CD14-positive monocyte (primary cell): ENCODE measurements at regions of chr19 and their contacts with region 1.

Region 1: DNA sequence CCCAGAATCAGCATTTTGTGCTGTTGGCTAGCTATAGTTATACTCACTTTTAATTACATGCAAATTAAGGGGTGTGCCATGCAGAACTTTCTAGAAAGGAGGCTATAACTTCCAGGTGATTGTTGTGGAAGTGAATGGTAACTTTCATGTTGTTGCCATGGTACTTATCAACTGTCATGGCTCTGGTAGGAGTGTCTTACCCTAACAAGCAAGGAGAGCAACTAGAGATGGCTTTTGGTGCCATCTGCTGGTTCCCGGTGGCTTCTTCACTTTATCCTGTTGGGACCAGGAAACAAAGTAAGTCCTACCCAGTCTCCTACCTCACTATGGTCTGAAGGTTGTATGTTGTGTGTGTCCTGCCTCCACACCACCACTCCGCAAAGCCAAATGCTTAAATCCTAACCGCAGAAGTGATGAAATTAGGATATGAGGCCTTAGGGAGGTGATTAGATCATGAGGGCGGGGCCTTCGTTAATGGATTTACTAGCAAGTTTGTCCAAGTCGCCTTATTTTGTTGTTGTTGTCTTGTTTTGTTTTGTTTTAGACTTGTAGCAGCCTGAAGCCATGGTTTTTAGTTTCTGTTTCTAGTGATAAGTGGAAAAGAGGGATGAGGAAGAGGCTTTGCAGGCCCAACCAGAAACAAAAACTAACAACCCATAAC is 22.6 kb downstream of the FBXL12 start:
- DNase-seq: peak; percentile 85 to 94 (median 86)
- H3K4me3 ChIP-seq: no peak overlapping the region
- H3K4me3 Mint-ChIP-seq: peak overlapping the region; percentile 23 to 43
- H3K27ac ChIP-seq: peak overlapping the region in 1 of 2 donors; percentile 71
- H3K27ac Mint-ChIP-seq: peak overlapping the region; percentile 9 to 91 (median 72)
- H3K4me1 ChIP-seq: peaks cover 28 to 37% of the 10 kb centered on the region in 2 donors
- H3K4me1 Mint-ChIP-seq: peaks cover 34% of the 10 kb centered on the region
- H3K27me3 ChIP-seq: no peaks in the 10 kb centered on the region
- H3K27me3 Mint-ChIP-seq: no peaks in the 10 kb centered on the region
- CTCF ChIP-seq: peak; percentile 82

Region 2: DNA sequence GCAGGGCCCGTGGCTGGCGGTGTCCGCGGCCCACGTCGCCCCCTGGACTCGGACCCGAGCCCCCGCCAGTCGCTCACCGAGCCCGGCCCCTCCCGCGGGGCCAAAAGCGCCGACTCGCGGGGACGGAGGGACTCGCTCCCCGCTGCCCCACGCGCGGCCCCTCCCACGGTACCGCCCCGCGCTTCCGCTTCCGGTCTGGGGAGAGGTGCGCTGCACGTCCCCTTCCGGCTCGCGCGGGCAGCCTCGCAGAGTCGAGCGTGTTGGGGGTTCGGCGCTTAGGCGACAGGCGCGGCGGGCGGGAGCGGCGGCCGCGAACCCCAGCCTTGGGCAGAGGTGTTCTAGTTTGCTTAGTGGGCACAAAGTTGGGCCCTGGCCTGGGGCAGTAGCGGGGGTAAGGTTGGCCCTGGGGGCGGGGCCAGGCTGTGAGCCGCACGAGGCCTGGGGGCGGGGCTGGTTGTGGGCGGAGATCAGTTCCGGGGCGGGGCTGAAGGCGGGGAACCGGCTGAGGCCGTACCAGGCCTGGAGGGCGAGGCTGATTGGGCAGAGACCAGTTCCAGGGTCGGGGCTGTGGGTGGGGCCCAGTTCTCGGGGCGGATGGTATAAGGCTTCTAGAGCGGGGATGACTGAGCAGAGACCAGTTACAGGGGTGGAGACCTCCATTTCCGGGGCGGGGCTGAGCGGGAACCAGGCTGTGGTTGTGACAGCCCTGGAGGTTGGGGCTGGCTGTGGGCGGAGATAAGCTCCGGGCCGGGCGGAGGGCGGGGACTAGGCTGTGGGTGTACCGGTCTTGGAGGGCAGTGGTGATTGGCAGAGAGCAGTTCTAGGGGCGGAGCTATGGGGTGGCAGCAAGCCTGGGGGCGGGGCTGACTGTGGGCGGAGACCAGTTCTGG is 963.9 kb before region 1 on chr19 and contains the starts of genes MBD3L1 and ZNF558:
- intact Hi-C with region 1: loop called in 1 of 2 experiments (anchors 10 kb)
- DNase-seq: peak; percentile 98 to 99 (median 98)
- H3K4me3 ChIP-seq: peak within 1 kb of the TSS; percentile 65 to 92 (median 82)
- H3K4me3 Mint-ChIP-seq: peak within 1 kb of the TSS; percentile 85 to 91
- H3K27ac ChIP-seq: peak within 1 kb of the TSS; percentile 80 to 91
- H3K27ac Mint-ChIP-seq: peak within 1 kb of the TSS; percentile 86 to 96 (median 94)
- H3K4me1 ChIP-seq: peaks cover 11 to 18% of the 10 kb centered on the region in 2 donors
- H3K4me1 Mint-ChIP-seq: peaks cover 16% of the 10 kb centered on the region
- H3K27me3 ChIP-seq: no peaks in the 10 kb centered on the region
- H3K27me3 Mint-ChIP-seq: peaks cover 2 to 3% (median 3%) of the 10 kb centered on the region in 3 donors
- CTCF ChIP-seq: peak; percentile 46
- polyA plus RNA-seq, gene MBD3L1: not detected
- polyA plus RNA-seq, gene ZNF558: 3.7 to 22.1 (median 5.6) TPM

Region 3: GRCh38 chr19:9205501-9206113 is 590.6 kb before region 1 on chr19:
- intact Hi-C with region 1: loop called (anchors 5 to 10 kb)
- DNase-seq: peak; percentile 30 to 59 (median 44)
- H3K4me3 ChIP-seq: no peak overlapping the region
- H3K4me3 Mint-ChIP-seq: peak overlapping the region; percentile 52 to 76
- H3K27ac ChIP-seq: no peak overlapping the region
- H3K27ac Mint-ChIP-seq: peak overlapping the region in 1 of 7 donors; percentile 33
- H3K4me1 ChIP-seq: no peaks in the 10 kb centered on the region
- H3K4me1 Mint-ChIP-seq: peaks cover 5% of the 10 kb centered on the region
- H3K27me3 ChIP-seq: no peaks in the 10 kb centered on the region
- H3K27me3 Mint-ChIP-seq: peaks cover 0 to 17% (median 7%) of the 10 kb centered on the region in 3 donors
- CTCF ChIP-seq: peak; percentile 94

Region 4: DNA sequence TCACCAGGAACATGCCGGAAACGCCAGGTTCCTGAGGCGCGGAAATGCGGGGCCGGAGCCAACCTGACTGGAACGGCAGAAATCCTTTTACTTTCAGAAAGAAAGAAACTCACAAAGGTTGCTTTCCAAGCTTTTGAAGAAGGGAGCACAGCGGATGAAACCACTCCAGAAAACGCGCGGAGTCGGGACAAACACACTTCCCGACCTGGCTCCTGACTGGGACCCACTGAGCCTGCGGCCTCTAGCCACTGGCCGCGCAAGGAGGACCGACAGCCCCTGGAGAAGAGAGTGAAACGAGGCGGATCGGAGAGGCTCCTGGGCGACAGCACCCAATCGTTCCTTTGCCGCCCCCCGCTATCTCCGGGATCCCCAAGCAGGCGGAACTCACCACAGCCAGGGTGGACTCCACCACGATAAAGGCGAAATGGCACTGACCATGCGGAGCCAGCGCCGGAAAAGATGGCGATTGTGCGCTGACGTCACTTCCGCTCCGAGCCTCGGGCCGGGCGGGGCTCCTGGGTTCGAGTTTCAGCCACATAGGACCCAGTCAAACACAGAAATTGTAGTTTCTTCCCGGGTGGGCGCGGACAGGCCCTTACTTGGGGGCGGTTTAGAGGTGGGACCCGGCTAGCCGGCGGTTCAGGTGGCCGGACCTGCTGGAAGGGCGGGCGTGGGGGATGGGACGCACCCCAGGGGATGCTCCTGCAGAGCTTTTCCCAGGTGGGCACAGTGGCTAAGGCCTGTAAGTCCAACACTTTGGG is 212.0 kb before region 1 on chr19 and contains the start of gene ZNF121:
- intact Hi-C with region 1: loop called in 1 of 2 experiments (anchors 2 kb)
- DNase-seq: peak; percentile 78 to 80 (median 79)
- H3K4me3 ChIP-seq: peak within 1 kb of the TSS; percentile 68 to 95 (median 81)
- H3K4me3 Mint-ChIP-seq: peak within 1 kb of the TSS; percentile 93 to 96
- H3K27ac ChIP-seq: peak within 1 kb of the TSS; percentile 84 to 91
- H3K27ac Mint-ChIP-seq: peak within 1 kb of the TSS; percentile 92 to 98 (median 95)
- H3K4me1 ChIP-seq: peaks cover 10 to 17% of the 10 kb centered on the region in 2 donors
- H3K4me1 Mint-ChIP-seq: peaks cover 16% of the 10 kb centered on the region
- H3K27me3 ChIP-seq: no peaks in the 10 kb centered on the region
- H3K27me3 Mint-ChIP-seq: peaks cover 4 to 11% (median 7%) of the 10 kb centered on the region in 3 donors
- CTCF ChIP-seq: no peak
- polyA plus RNA-seq, gene ZNF121: 1.5 to 7.2 (median 3.8) TPM

Region 5: GRCh38 chr19:9768175-9769112 is 27.8 kb before region 1 on chr19 and contains the start of gene ZNF846:
- intact Hi-C with region 1: loop called in 1 of 2 experiments (anchors 2 kb)
- DNase-seq: peak; percentile 93 to 95 (median 94)
- H3K4me3 ChIP-seq: peak within 1 kb of the TSS; percentile 47 to 94 (median 70)
- H3K4me3 Mint-ChIP-seq: peak within 1 kb of the TSS; percentile 90 to 97
- H3K27ac ChIP-seq: peak within 1 kb of the TSS; percentile 87 to 99
- H3K27ac Mint-ChIP-seq: peak within 1 kb of the TSS; percentile 97 to 99 (median 99)
- H3K4me1 ChIP-seq: peaks cover 15 to 16% of the 10 kb centered on the region in 2 donors
- H3K4me1 Mint-ChIP-seq: peaks cover 8% of the 10 kb centered on the region
- H3K27me3 ChIP-seq: no peaks in the 10 kb centered on the region
- H3K27me3 Mint-ChIP-seq: peaks cover 0 to 3% (median 0%) of the 10 kb centered on the region in 3 donors
- CTCF ChIP-seq: no peak
- polyA plus RNA-seq, gene ZNF846: 2.5 to 6.9 (median 6.5) TPM

Region 6: DNA sequence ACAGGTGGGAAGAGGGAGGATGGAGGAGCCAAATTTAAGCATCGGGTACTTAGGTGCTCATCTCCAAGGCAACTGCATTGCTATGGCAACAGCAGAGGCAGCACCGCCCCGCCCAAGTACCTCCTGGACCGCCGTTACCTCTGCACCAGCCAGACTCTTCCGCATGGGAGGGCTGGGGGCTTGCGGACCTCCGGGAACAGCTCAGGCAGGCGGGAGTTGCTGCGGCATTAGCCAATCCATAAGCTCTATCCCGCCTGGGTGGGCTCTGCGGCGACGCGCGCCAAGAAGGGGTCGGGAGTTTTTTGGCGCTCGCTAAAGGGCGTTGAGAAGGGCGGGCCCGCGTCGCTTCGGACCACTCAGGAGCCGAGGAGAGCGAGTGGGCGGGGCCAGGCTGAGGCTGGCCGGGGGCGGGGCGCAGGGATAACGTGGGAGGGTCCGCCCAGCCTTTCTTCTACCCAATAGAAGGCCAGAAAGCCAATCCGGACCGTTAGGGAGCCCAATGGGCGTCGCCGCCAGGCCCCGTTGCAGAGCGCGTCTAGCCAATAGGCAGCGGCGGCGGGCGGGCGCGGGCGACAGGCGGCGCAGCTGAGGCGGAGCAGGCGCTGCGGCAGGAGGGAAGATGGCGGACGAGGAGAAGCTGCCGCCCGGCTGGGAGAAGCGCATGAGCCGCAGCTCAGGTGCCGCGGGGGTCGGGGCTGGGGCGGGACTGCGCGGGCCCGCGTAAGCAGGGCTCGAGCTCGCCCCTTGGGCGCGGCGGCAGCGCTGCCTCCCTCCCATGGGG is 38.7 kb after region 1 on chr19 and contains the start of gene PIN1:
- intact Hi-C with region 1: no loop called
- DNase-seq: peak; percentile 98 to 100 (median 99)
- H3K4me3 ChIP-seq: peak within 1 kb of the TSS; percentile 62 to 86 (median 64)
- H3K4me3 Mint-ChIP-seq: peak within 1 kb of the TSS; percentile 86 to 91
- H3K27ac ChIP-seq: peak within 1 kb of the TSS; percentile 3 to 71
- H3K27ac Mint-ChIP-seq: peak within 1 kb of the TSS; percentile 50 to 95 (median 87)
- H3K4me1 ChIP-seq: peaks cover 11 to 14% of the 10 kb centered on the region in 2 donors
- H3K4me1 Mint-ChIP-seq: peaks cover 12% of the 10 kb centered on the region
- H3K27me3 ChIP-seq: no peaks in the 10 kb centered on the region
- H3K27me3 Mint-ChIP-seq: peaks cover 0 to 2% (median 0%) of the 10 kb centered on the region in 3 donors
- CTCF ChIP-seq: peak; percentile 52
- polyA plus RNA-seq, gene PIN1: 67.4 to 79.8 (median 68.3) TPM

Region 7: GRCh38 chr19:9865732-9866501 is 69.7 kb after region 1 on chr19:
- intact Hi-C with region 1: no loop called
- DNase-seq: no peak
- H3K4me3 ChIP-seq: no peak overlapping the region
- H3K4me3 Mint-ChIP-seq: no peak overlapping the region
- H3K27ac ChIP-seq: no peak overlapping the region
- H3K27ac Mint-ChIP-seq: no peak overlapping the region
- H3K4me1 ChIP-seq: no peaks in the 10 kb centered on the region
- H3K4me1 Mint-ChIP-seq: no peaks in the 10 kb centered on the region
- H3K27me3 ChIP-seq: no peaks in the 10 kb centered on the region
- H3K27me3 Mint-ChIP-seq: peaks cover 5 to 12% (median 10%) of the 10 kb centered on the region in 3 donors
- CTCF ChIP-seq: no peak